PC-9 (cell line): ENCODE measurements at regions of chr11 and their contacts with region 1.

Region 1: DNA sequence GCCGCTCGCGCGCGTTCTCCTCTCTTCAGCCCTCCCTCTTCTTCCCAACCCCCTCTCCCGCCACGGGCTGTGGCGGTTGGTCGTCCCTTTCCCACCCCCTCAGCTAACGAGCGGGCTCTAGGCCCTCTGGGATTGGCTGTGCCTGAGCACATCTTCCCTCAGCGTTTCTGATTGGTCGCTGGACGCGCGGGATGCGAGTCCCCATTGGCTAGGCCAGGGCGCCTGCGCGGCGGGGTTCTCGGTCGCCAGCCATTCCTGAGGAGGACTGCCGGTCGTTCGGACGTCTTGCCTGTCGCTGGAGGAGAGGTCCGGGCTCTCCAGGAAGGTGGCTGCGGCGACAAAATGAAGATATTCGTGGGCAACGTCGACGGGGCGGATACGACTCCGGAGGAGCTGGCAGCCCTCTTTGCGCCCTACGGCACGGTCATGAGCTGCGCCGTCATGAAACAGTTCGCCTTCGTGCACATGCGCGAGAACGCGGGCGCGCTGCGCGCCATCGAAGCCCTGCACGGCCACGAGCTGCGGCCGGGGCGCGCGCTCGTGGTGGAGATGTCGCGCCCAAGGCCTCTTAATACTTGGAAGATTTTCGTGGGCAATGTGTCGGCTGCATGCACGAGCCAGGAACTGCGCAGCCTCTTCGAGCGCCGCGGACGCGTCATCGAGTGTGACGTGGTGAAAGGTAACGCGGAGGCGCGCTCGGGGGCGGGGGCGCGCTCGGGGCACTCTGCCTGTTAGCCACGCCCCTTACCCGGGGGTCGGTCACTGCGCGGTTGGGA is at the start of gene RBM14:
- DNase-seq: peak; percentile 99
- H3K4me3 ChIP-seq: peak within 1 kb of the TSS; percentile 73
- H3K27ac ChIP-seq: peak within 1 kb of the TSS; percentile 73
- H3K4me1 ChIP-seq: peaks cover 41% of the 10 kb centered on the region
- H3K27me3 ChIP-seq: no peaks in the 10 kb centered on the region
- CTCF ChIP-seq: no peak
- total RNA-seq, gene RBM14: 108 and 112 TPM in 2 replicates

Region 2: GRCh38 chr11:65606876-65607613 is 1009.5 kb before region 1 on chr11:
- CTCF ChIA-PET with region 1: no interaction called
- POLR2A ChIA-PET with region 1: no interaction called
- intact Hi-C with region 1: no loop called
- DNase-seq: no peak
- H3K4me3 ChIP-seq: no peak overlapping the region
- H3K27ac ChIP-seq: no peak overlapping the region
- H3K4me1 ChIP-seq: peaks cover 2% of the 10 kb centered on the region; the same call in 1 of the 2 replicates
- H3K27me3 ChIP-seq: no peaks in the 10 kb centered on the region
- CTCF ChIP-seq: no peak

Region 3: DNA sequence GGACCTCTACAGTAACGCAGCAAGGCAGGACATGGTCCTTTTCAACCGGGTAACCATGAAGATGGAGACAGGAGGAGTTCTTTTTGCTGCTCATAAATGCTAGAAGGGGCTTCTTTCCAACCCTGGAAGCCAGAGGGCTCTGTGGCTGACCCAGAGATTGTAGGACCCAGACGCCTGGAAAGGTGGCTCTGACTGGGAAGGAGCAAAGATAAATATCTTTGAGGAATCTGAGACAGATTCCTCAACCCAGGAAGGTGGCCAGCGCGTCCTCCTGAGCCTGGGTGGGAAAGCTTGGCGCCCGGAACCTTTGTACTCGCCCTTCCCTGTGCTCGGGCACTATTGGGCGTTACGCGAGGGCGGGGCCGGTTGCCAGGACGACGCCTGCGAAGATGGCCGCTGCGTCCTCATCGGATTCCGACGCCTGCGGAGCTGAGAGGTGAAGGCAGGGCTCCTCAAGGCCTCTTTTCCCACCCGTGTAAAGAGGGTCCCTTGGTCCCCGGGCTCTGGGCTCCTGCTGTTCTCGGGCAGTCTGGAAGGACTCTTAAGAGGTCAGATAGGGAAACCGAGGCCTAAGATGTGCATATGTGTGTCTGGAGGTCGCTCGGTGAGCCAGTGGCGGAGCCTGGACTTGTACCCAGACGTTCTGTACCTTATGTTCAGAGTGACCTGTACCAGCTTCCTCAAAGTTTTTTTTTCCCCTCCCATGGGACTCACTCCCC is 106.1 kb before region 1 on chr11 and contains the start of gene BBS1:
- CTCF ChIA-PET with region 1: no interaction called
- POLR2A ChIA-PET with region 1: interaction called, 11 read pairs
- intact Hi-C with region 1: no loop called
- DNase-seq: peak; percentile 71 to 79
- H3K4me3 ChIP-seq: peak within 1 kb of the TSS; percentile 93
- H3K27ac ChIP-seq: no peak within 1 kb of the TSS
- H3K4me1 ChIP-seq: peaks cover 11% of the 10 kb centered on the region
- H3K27me3 ChIP-seq: no peaks in the 10 kb centered on the region
- CTCF ChIP-seq: no peak
- total RNA-seq, gene BBS1: 56.1 and 63.4 TPM in 2 replicates

Region 4: GRCh38 chr11:66545701-66546367 is 70.7 kb before region 1 on chr11 and contains the start of gene ZDHHC24:
- CTCF ChIA-PET with region 1: no interaction called
- POLR2A ChIA-PET with region 1: interaction called, 9 read pairs
- intact Hi-C with region 1: loop called (anchors 2 kb)
- DNase-seq: peak; percentile 89 to 98
- H3K4me3 ChIP-seq: peak within 1 kb of the TSS; percentile 87
- H3K27ac ChIP-seq: no peak within 1 kb of the TSS
- H3K4me1 ChIP-seq: peaks cover 13% of the 10 kb centered on the region
- H3K27me3 ChIP-seq: peaks cover 33% of the 10 kb centered on the region
- CTCF ChIP-seq: no peak
- total RNA-seq, gene ZDHHC24: 19.4 and 28.7 TPM in 2 replicates

Region 5: GRCh38 chr11:66592457-66593302 is 23.9 kb before region 1 on chr11 and contains the starts of genes CCDC87 and CCS:
- CTCF ChIA-PET with region 1: no interaction called
- POLR2A ChIA-PET with region 1: interaction called, 9 read pairs
- intact Hi-C with region 1: loop called (anchors 2 kb)
- DNase-seq: peak; percentile 90 to 97
- H3K4me3 ChIP-seq: peak within 1 kb of the TSS; percentile 90
- H3K27ac ChIP-seq: no peak within 1 kb of the TSS
- H3K4me1 ChIP-seq: peaks cover 16% of the 10 kb centered on the region
- H3K27me3 ChIP-seq: no peaks in the 10 kb centered on the region
- CTCF ChIP-seq: peak; percentile 80
- total RNA-seq, gene CCDC87: 0.83 and 1.0 TPM in 2 replicates
- total RNA-seq, gene CCS: 47.2 and 61.0 TPM in 2 replicates

Region 6: GRCh38 chr11:66638177-66639065 is 21.9 kb after region 1 on chr11 and contains the start of gene RBM4:
- CTCF ChIA-PET with region 1: interaction called, 4 read pairs
- POLR2A ChIA-PET with region 1: interaction called, 18 read pairs
- intact Hi-C with region 1: loop called (anchors 1 kb)
- DNase-seq: peak; percentile 99 to 100
- H3K4me3 ChIP-seq: peak within 1 kb of the TSS; percentile 92
- H3K27ac ChIP-seq: peak within 1 kb of the TSS; percentile 68
- H3K4me1 ChIP-seq: peaks cover 38% of the 10 kb centered on the region
- H3K27me3 ChIP-seq: no peaks in the 10 kb centered on the region
- CTCF ChIP-seq: no peak
- total RNA-seq, gene RBM4: 131 and 140 TPM in 2 replicates

Region 7: GRCh38 chr11:66734215-66734614 is 117.6 kb after region 1 on chr11:
- CTCF ChIA-PET with region 1: no interaction called
- POLR2A ChIA-PET with region 1: no interaction called
- intact Hi-C with region 1: no loop called
- DNase-seq: no peak
- H3K4me3 ChIP-seq: no peak overlapping the region
- H3K27ac ChIP-seq: no peak overlapping the region
- H3K4me1 ChIP-seq: no peaks in the 10 kb centered on the region
- H3K27me3 ChIP-seq: 0 out of 2 replicates have a peak, but pooled peaks cover 3% of the 10 kb centered on the region
- CTCF ChIP-seq: no peak

Region 8: GRCh38 chr11:67006139-67006884 is 389.7 kb after region 1 on chr11:
- CTCF ChIA-PET with region 1: no interaction called
- POLR2A ChIA-PET with region 1: interaction called, 15 read pairs
- intact Hi-C with region 1: no loop called
- DNase-seq: peak; percentile 37 to 79
- H3K4me3 ChIP-seq: peak overlapping the region; percentile 52; the same call in 1 of the 2 replicates
- H3K27ac ChIP-seq: no peak overlapping the region
- H3K4me1 ChIP-seq: peaks cover 13% of the 10 kb centered on the region
- H3K27me3 ChIP-seq: no peaks in the 10 kb centered on the region
- CTCF ChIP-seq: no peak

Region 9: DNA sequence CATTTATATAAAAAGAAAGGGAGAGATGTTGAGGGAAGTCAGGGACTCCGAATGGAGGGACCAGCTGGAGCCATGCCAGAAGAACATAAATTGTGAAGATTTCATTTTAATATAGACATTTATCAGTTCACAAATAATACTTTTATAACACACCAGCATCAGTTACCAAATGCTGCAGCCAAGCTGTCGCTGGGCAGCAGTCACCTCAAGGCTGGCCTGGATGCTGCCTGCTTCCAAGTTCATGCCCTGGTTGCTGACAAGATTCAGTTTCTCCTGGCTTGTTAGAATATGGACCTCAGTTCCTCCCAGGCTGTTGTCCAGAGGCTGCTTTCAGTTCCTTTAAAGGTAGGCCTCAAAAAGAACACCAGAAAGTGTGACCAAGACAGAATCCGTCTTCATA is 1088.7 kb after region 1 on chr11:
- CTCF ChIA-PET with region 1: no interaction called
- POLR2A ChIA-PET with region 1: no interaction called
- intact Hi-C with region 1: no loop called
- DNase-seq: no peak
- H3K4me3 ChIP-seq: no peak overlapping the region
- H3K27ac ChIP-seq: no peak overlapping the region
- H3K4me1 ChIP-seq: peaks cover 44% of the 10 kb centered on the region
- H3K27me3 ChIP-seq: no peaks in the 10 kb centered on the region
- CTCF ChIP-seq: no peak